T-cell (primary cell): ENCODE measurements at regions of chr1 and their contacts with region 1.

Region 1: GRCh38 chr1:183778045-183778444 is 26.9 kb upstream of the RGL1 start:
- DNase-seq: no peak
- ATAC-seq: no peak
- H3K4me3 ChIP-seq: no peak overlapping the region
- H3K4me3 Mint-ChIP-seq: no peak overlapping the region
- H3K27ac ChIP-seq: no peak overlapping the region
- H3K27ac Mint-ChIP-seq: no peak overlapping the region
- H3K4me1 ChIP-seq: no peaks in the 10 kb centered on the region
- H3K4me1 Mint-ChIP-seq: no peaks in the 10 kb centered on the region
- H3K27me3 ChIP-seq: no peaks in the 10 kb centered on the region
- H3K27me3 Mint-ChIP-seq: no peaks in the 10 kb centered on the region

Region 2: GRCh38 chr1:183742355-183742754 is 35.7 kb before region 1 on chr1:
- CTCF ChIA-PET with region 1: no interaction called
- POLR2A ChIA-PET with region 1: no interaction called
- DNase-seq: no peak
- ATAC-seq: no peak
- H3K4me3 ChIP-seq: no peak overlapping the region
- H3K4me3 Mint-ChIP-seq: no peak overlapping the region
- H3K27ac ChIP-seq: no peak overlapping the region
- H3K27ac Mint-ChIP-seq: no peak overlapping the region
- H3K4me1 ChIP-seq: no peaks in the 10 kb centered on the region
- H3K4me1 Mint-ChIP-seq: peaks cover 0 to 2% (median 0%) of the 10 kb centered on the region in 3 donors
- H3K27me3 ChIP-seq: no peaks in the 10 kb centered on the region
- H3K27me3 Mint-ChIP-seq: no peaks in the 10 kb centered on the region

Region 3: DNA sequence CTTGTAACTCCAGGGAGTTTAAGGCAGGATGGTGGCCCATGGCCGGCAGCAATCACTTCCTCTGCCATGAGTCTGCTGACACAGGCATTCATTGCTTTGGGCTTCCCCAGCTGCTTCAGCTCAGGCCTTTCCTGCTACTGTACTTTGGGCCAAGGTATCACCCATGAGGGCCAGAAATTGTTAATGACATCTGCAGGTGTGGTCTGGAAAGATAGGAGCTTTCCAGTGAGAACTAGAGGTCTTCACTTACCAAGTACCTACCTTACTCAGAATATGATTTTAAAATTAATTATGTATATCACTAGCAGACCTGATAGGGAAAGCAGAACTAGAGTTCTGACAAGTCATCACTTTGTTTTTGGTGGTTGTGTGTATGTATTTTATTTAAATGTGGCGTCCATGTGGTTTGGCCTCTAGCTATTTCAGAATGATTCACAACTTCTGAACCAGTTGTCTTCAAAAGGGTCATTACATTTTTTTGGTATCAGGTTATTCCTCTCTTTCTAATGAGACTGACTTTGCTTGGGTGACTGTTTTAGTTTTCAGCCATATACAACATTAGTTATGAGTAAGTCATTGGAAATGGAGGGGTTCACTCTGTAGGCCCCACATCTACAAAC is 29.6 kb after region 1 on chr1:
- CTCF ChIA-PET with region 1: no interaction called
- POLR2A ChIA-PET with region 1: interaction called in 1 of 2 experiments, 10 read pairs
- DNase-seq: no peak
- ATAC-seq: no peak
- H3K4me3 ChIP-seq: no peak overlapping the region
- H3K4me3 Mint-ChIP-seq: no peak overlapping the region
- H3K27ac ChIP-seq: no peak overlapping the region
- H3K27ac Mint-ChIP-seq: no peak overlapping the region
- H3K4me1 ChIP-seq: peaks cover 7 to 10% of the 10 kb centered on the region in 2 experiments
- H3K4me1 Mint-ChIP-seq: peaks cover 6 to 17% (median 12%) of the 10 kb centered on the region in 3 donors
- H3K27me3 ChIP-seq: peaks cover 0 to 6% of the 10 kb centered on the region in 2 experiments
- H3K27me3 Mint-ChIP-seq: peaks cover 17 to 21% of the 10 kb centered on the region in 2 donors

Region 4: DNA sequence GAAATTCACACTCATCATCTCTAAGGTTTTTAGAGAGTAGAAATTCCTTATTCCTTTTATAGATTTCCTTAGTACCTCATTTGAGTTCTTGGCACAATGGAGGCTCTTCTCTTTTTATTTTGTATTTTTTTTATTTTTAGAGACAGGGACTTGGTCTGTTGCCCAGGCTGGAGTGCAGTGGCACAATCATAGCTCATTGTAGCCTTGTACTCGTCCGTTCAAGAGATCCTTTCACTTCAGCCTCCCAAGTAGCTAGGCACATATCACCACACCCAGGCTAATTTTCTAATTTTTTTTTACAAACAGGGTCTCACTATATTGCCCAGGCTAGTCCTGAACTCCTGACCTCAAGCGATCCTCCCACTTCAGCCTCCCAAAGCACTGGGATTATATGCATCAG is 56.5 kb after region 1 on chr1:
- CTCF ChIA-PET with region 1: no interaction called
- POLR2A ChIA-PET with region 1: no interaction called
- DNase-seq: no peak
- ATAC-seq: no peak
- H3K4me3 ChIP-seq: no peak overlapping the region
- H3K4me3 Mint-ChIP-seq: no peak overlapping the region
- H3K27ac ChIP-seq: no peak overlapping the region
- H3K27ac Mint-ChIP-seq: no peak overlapping the region
- H3K4me1 ChIP-seq: no peaks in the 10 kb centered on the region
- H3K4me1 Mint-ChIP-seq: no peaks in the 10 kb centered on the region
- H3K27me3 ChIP-seq: no peaks in the 10 kb centered on the region
- H3K27me3 Mint-ChIP-seq: no peaks in the 10 kb centered on the region

Region 5: DNA sequence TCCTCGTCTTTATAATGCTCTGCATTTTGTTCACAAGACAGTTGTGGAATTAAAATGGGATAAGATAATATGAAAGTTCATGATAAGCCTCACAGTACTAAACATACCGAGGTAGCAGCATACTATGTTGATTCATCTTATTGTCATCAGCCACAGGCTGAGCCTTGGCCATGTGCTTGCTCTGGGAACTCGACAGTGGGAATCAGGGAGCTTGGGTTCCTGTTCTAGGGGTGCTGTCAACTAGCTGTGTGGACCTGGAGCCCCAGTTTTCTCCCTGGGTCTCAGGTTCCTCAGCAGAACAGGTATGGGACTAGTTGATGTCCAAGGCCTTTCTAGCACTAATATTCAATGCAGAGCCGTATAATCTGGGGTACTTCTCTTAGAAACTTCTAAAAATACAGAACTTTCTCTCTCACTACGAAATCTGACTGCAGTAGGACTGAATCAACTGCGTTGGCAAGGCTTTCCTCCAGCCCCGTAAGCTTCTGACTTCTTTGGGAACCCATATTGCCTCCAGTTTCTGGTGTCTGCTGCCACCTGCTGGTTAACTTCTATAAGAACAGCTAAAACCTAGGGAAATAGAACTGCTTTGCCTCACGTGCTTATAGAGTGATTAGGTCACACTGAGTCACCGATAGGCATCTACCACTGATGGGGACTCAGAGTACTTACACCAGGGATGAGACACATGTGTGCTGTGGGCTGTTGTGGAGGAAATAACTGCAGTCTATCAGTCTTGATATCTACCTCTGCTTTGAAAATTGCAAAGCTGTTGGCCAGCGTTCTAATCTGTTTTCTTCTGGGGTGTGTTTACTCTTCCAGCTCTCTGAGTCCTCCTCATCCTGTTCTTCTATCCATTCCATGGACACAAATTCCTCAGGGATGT is 137.8 kb after region 1 on chr1:
- CTCF ChIA-PET with region 1: no interaction called
- POLR2A ChIA-PET with region 1: no interaction called
- DNase-seq: peak; percentile 22 to 88 (median 57)
- ATAC-seq: peak; percentile 91 to 98 (median 97)
- H3K4me3 ChIP-seq: no peak overlapping the region
- H3K4me3 Mint-ChIP-seq: no peak overlapping the region
- H3K27ac ChIP-seq: no peak overlapping the region
- H3K27ac Mint-ChIP-seq: peak overlapping the region; percentile 71 to 81
- H3K4me1 ChIP-seq: peaks cover 2 to 8% of the 10 kb centered on the region in 2 experiments
- H3K4me1 Mint-ChIP-seq: peaks cover 11 to 13% (median 12%) of the 10 kb centered on the region in 3 donors
- H3K27me3 ChIP-seq: no peaks in the 10 kb centered on the region
- H3K27me3 Mint-ChIP-seq: no peaks in the 10 kb centered on the region